ENCODE measurements at regions of chr13 and their contacts with region 1.

Region 1: GRCh38 chr13:42991892-42992763 is at the start of gene EPSTI1:
- DNase-seq: peak; percentile 77
- H3K4me3 ChIP-seq: peak within 1 kb of the TSS; percentile 62 to 77 (median 70)
- H3K27ac ChIP-seq: peak within 1 kb of the TSS; percentile 2
- H3K4me1 ChIP-seq: peaks cover 20% of the 10 kb centered on the region
- H3K27me3 ChIP-seq: no peaks in the 10 kb centered on the region
- CTCF ChIP-seq: no peak
- POLR2A ChIP-seq: no peak
- total RNA-seq, gene EPSTI1: 0.74 and 3.1 TPM in 2 replicates

Region 2: GRCh38 chr13:43023289-43023951 is 31.3 kb after region 1 on chr13 and contains the start of gene DNAJC15:
- CTCF ChIA-PET with region 1: interaction called, 3 read pairs
- POLR2A ChIA-PET with region 1: interaction called, 8 read pairs
- dilution Hi-C with region 1: no loop called
- intact Hi-C with region 1: loop called (anchors 1 kb)
- DNase-seq: peak; percentile 91
- H3K4me3 ChIP-seq: peak within 1 kb of the TSS; percentile 62 to 92 (median 70)
- H3K27ac ChIP-seq: peak within 1 kb of the TSS; percentile 59
- H3K4me1 ChIP-seq: peaks cover 2% of the 10 kb centered on the region
- H3K27me3 ChIP-seq: no peaks in the 10 kb centered on the region
- CTCF ChIP-seq: no peak
- POLR2A ChIP-seq: peak; percentile 89
- total RNA-seq, gene DNAJC15: 20.9 and 21.8 TPM in 2 replicates

Region 3: GRCh38 chr13:43054803-43055802 is 63.0 kb after region 1 on chr13:
- CTCF ChIA-PET with region 1: interaction called, 3 read pairs
- POLR2A ChIA-PET with region 1: no interaction called
- dilution Hi-C with region 1: no loop called
- intact Hi-C with region 1: loop called (anchors 1 kb)
- DNase-seq: peak; percentile 69
- H3K4me3 ChIP-seq: peak overlapping the region; percentile 37 to 85 (median 69)
- H3K27ac ChIP-seq: peak overlapping the region; percentile 79
- H3K4me1 ChIP-seq: peaks cover 29% of the 10 kb centered on the region
- H3K27me3 ChIP-seq: no peaks in the 10 kb centered on the region
- CTCF ChIP-seq: no peak
- POLR2A ChIP-seq: no peak

Region 4: DNA sequence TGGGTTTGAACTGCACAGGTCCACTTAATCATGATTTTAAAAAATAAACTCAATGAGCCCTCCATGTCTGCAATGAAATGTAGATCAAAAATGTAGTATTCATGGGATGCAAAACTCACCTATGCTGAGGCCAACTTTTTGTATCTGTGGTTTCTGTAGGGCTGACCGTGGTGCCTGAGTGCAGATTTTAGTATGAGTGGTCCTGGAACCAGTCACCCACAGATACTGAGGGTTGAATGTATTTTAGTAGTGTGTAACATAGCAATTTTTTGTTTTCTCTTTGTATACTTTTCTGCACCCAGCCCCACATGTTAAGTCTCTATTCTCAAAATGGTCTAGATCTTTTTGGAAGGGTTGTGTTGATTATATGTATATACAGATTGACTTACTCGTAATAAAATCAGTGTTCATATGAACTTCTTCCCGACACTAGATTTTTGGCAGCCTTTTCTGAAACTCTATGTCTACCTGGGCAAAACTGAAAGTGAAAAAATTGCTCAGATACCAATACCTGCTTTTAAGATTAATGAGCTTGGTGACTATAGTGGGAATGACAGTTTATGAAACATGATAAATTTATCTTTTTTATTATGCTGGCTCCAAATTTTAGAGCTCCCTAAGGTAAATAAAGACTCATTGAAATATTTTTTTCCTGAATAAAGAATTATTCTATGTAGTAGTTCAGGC is 82.8 kb after region 1 on chr13:
- CTCF ChIA-PET with region 1: no interaction called
- POLR2A ChIA-PET with region 1: no interaction called
- dilution Hi-C with region 1: no loop called
- intact Hi-C with region 1: loop called (anchors 5 kb)
- DNase-seq: no peak
- H3K4me3 ChIP-seq: no peak overlapping the region
- H3K27ac ChIP-seq: no peak overlapping the region
- H3K4me1 ChIP-seq: peaks cover 21% of the 10 kb centered on the region
- H3K27me3 ChIP-seq: no peaks in the 10 kb centered on the region
- CTCF ChIP-seq: no peak
- POLR2A ChIP-seq: no peak